ENCODE measurements at regions of chr2 and their contacts with region 1.

Region 1: GRCh38 chr2:216114714-216115557 is 5.8 kb downstream of the XRCC5 start:
- DNase-seq: peak; percentile 99
- ATAC-seq: peak; percentile 85
- H3K4me3 Mint-ChIP-seq: peak overlapping the region; percentile 96
- H3K27ac Mint-ChIP-seq: peak overlapping the region; percentile 98
- H3K4me1 Mint-ChIP-seq: peaks cover 90% of the 10 kb centered on the region
- H3K27me3 Mint-ChIP-seq: no peaks in the 10 kb centered on the region
- CTCF ChIP-seq: peak; percentile 88

Region 2: DNA sequence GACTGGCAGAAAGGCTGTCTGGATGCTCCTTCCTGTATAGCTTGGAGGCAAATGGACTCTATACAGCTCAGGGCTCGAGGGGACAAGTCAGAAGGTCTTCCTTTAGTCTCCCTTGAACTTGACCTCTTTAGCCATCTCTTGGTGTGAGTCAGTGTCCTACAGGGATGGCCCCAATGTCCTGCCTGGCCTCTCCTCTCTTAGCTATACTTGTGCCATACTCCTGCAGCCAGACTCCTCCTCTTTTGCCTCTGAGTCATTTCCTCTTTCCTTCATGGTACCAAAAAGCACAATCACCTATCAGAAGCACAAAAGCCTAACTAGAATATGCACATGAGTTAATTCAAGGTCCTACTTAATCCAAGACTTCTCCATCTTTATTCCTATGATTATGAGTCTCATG is 106.9 kb after region 1 on chr2:
- CTCF ChIA-PET with region 1: no interaction called
- POLR2A ChIA-PET with region 1: no interaction called
- intact Hi-C with region 1: no loop called
- DNase-seq: peak; percentile 22
- ATAC-seq: peak; percentile 68
- H3K4me3 Mint-ChIP-seq: no peak overlapping the region
- H3K27ac Mint-ChIP-seq: peak overlapping the region; percentile 0
- H3K4me1 Mint-ChIP-seq: peaks cover 44% of the 10 kb centered on the region
- H3K27me3 Mint-ChIP-seq: no peaks in the 10 kb centered on the region
- CTCF ChIP-seq: no peak

Region 3: DNA sequence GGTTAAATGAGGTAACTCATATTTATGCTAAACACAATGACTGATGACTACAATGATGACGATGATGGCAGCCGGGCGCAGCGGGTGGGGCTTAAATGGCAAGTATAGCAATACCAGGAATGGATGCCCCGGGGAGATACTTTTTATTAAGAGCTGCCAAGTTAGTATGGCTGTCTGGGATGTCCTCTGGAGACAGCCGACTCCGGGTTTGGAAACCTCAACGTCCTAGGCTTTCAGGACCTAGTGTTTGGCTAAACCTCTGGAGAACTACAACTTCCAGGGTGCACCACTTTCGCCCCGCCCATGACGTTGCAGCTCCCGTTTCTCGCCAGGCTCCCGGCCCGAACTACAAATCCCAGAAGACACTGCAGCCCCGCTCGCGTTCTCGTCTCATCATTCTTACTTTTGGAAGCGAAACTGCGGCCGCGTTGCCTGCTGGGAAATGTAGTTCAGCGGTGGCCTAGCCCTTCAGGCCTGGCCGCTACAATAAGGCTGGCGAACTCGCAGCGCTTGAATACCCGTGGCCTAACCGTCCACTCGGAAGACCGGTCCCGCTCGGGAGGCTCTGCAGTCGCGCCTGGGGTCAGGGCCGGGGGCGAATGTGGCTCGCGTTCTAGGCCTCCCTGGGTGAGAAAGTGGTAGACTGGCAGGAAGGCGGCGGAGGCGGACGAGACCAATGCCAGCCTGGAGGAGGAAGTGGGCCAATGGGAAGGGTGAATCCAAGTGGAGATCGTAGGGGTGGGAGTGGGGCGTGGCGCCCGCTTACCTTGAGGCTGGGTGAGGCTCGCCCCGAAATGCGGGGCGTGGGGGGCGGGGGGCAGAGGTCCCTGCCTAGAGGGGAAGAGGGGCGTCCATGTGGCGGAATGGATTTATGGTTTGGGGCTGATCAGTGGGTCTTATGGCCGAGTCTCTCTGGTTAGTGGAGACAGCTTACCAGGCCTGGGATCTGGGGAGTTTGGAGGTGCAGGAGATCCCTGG is 297.4 kb after region 1 on chr2 and contains the start of gene SMARCAL1:
- CTCF ChIA-PET with region 1: no interaction called
- POLR2A ChIA-PET with region 1: no interaction called
- intact Hi-C with region 1: loop called (anchors 10 kb)
- DNase-seq: peak; percentile 100
- ATAC-seq: peak; percentile 94
- H3K4me3 Mint-ChIP-seq: peak within 1 kb of the TSS; percentile 98
- H3K27ac Mint-ChIP-seq: peak within 1 kb of the TSS; percentile 96
- H3K4me1 Mint-ChIP-seq: peaks cover 9% of the 10 kb centered on the region
- H3K27me3 Mint-ChIP-seq: no peaks in the 10 kb centered on the region
- CTCF ChIP-seq: no peak
- total RNA-seq, gene SMARCAL1: 22.3 to 24.7 TPM